ENCODE measurements at regions of chr16 and their contacts with region 1.

Region 1: GRCh38 chr16:75234856-75235696 is 16.3 kb downstream of the CTRB1 start:
- DNase-seq: peak; percentile 78
- H3K4me3 ChIP-seq: no peak overlapping the region
- H3K27ac ChIP-seq: peak overlapping the region in 6 of 8 donors; percentile 7 to 58 (median 39)
- H3K4me1 ChIP-seq: peaks cover 15 to 74% (median 44%) of the 10 kb centered on the region in 6 donors
- H3K27me3 ChIP-seq: peaks cover 0 to 87% (median 5%) of the 10 kb centered on the region in 7 donors
- CTCF ChIP-seq: no peak
- POLR2A ChIP-seq: no peak

Region 2: DNA sequence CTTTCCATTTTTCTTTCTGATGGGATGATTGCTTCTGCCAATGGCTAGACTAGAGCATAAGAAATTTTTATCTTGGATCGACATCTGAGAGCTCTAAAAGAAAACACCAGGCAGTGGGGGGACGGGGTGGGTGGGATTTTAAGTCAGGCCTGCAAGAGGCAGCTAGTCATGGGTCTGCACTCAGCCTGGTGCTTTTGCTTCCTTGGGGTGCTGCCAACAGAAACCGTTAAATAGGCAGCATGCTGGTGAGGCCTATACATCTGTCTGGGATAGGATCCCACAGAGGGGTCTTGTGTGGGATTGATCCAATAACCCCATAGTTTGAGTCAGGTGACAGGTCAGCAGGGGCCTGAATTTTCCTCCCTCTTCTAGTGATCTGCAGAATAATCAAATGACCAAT is 209.3 kb before region 1 on chr16:
- intact Hi-C with region 1: no loop called
- DNase-seq: no peak
- H3K4me3 ChIP-seq: no peak overlapping the region
- H3K27ac ChIP-seq: peak overlapping the region in 3 of 8 donors; percentile 39 to 46 (median 43)
- H3K4me1 ChIP-seq: peaks cover 0 to 29% (median 8%) of the 10 kb centered on the region in 6 donors
- H3K27me3 ChIP-seq: no peaks in the 10 kb centered on the region
- CTCF ChIP-seq: no peak
- POLR2A ChIP-seq: no peak

Region 3: DNA sequence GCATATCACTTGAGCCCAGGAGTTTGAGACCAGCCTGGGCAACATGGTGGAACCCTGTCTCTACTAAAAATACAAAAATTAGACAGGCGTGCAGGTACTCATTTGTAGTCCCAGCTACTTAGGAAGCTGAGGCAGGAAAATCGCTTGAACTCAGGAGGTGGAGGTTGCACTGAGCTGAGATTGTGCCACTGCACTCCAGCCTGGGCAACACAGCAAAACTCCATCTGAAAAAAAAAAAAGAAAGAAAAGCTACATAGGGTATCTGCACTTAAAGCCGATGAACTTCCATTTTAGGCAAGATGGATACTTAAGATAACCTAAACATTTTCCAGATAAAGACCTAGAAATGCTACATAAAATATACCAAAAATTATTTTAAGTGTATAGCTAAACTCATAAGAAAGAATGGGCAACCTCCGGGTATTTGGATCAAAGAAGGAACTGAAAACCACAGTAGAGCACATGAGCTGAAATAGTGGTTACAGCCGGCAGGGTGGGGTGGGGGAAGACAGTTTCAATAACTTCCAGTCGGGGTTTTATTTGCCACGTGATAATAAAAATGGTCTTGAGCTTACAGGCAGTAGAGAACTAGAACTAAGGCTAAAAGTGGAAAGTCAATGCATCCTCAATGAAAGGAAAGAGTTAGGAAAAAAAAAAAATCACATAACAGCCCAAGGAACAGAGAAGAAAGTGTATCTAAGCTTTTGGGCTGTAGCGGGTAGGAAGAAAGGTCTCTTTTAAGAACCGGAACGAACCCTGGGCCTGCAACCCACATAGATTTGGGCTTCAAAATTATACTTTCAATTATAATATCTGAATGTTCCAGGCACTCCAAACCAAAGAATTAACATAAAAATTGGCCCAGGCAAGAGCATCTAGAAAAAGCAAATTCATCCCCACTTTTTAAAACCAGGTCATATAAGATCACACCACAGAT is 145.1 kb after region 1 on chr16:
- intact Hi-C with region 1: loop called (anchors 5 kb)
- DNase-seq: no peak
- H3K4me3 ChIP-seq: no peak overlapping the region
- H3K27ac ChIP-seq: peak overlapping the region in 5 of 8 donors; percentile 5 to 40 (median 27)
- H3K4me1 ChIP-seq: peaks cover 30 to 61% (median 48%) of the 10 kb centered on the region in 6 donors
- H3K27me3 ChIP-seq: peaks cover 0 to 61% (median 0%) of the 10 kb centered on the region in 7 donors
- CTCF ChIP-seq: peak in 3 of 11 experiments; percentile 11 to 30 (median 21)
- POLR2A ChIP-seq: no peak

Region 4: GRCh38 chr16:75514296-75514695 is 279.2 kb after region 1 on chr16:
- intact Hi-C with region 1: no loop called
- DNase-seq: no peak
- H3K4me3 ChIP-seq: no peak overlapping the region
- H3K27ac ChIP-seq: no peak overlapping the region
- H3K4me1 ChIP-seq: peaks cover 0 to 17% (median 11%) of the 10 kb centered on the region in 6 donors
- H3K27me3 ChIP-seq: no peaks in the 10 kb centered on the region
- CTCF ChIP-seq: no peak
- POLR2A ChIP-seq: no peak